ENCODE measurements at regions of chr2 and their contacts with region 1.

Region 1: DNA sequence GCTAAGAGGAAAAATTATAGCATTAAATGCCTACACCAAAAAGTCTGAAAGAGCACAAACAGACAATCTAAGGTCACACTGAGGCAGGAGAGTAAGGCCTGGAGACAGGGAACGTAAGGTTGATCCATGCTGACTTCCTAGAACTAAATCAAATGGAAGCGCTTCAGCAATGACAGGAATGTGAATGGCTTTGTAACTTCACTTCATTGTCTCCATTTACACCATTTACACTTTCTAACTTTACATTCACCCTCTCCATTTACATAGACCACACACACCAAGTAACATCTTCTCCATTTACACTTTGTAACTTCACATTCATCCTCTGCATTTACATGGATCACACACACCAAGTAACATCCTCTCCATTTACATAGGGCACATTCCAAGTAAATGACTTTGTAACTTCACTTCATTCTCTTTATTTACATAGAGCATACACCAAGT is 103.1 kb upstream of the SPATS2L start:
- DNase-seq: peak; percentile 54
- ATAC-seq: peak; percentile 96
- H3K4me3 ChIP-seq: no peak overlapping the region
- H3K27ac ChIP-seq: no peak overlapping the region
- H3K4me1 ChIP-seq: no peaks in the 10 kb centered on the region; the same call in 1 of the 2 replicates
- H3K27me3 ChIP-seq: no peaks in the 10 kb centered on the region
- CTCF ChIP-seq: no peak
- POLR2A ChIP-seq: no peak
- RAD21 ChIP-seq: no peak

Region 2: DNA sequence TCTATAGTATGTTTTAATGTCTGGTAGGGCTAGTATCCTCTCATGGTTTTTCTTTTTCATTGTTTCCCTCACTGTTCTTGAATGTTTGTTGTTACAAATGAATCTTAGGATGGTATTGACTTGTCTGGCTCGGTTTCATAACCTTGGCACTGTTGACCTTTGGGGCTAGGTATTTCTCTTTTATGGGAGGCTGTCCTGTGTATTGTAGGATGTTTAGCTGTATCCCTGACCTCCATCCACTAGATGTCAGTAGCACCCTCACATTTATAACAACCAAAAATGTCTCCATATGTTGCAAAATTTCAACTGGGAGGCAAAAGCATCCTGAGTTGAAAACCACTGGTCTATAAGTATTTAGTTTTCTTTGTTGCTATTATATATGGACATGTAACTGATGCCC is 375.4 kb after region 1 on chr2:
- CTCF ChIA-PET with region 1: no interaction called
- POLR2A ChIA-PET with region 1: no interaction called
- dilution Hi-C with region 1: no loop called
- in situ Hi-C with region 1: no loop called
- intact Hi-C with region 1: loop called (anchors 2 kb)
- DNase-seq: peak; percentile 35
- ATAC-seq: peak; percentile 37; the same call in 1 of the 2 replicates
- H3K4me3 ChIP-seq: no peak overlapping the region
- H3K27ac ChIP-seq: no peak overlapping the region
- H3K4me1 ChIP-seq: no peaks in the 10 kb centered on the region
- H3K27me3 ChIP-seq: no peaks in the 10 kb centered on the region
- CTCF ChIP-seq: peak; percentile 46
- POLR2A ChIP-seq: no peak
- RAD21 ChIP-seq: peak; percentile 64